Activated CD4-positive, alpha-beta memory T cell treated with anti-CD3 and anti-CD28 coated beads for 36 hours (primary cell): ENCODE measurements at regions of chr10 and their contacts with region 1.

Region 1: GRCh38 chr10:79463578-79464496 is 18.4 kb upstream of the ZCCHC24 start:
- DNase-seq: no peak
- H3K4me3 Mint-ChIP-seq: no peak overlapping the region
- H3K27ac Mint-ChIP-seq: no peak overlapping the region
- H3K4me1 Mint-ChIP-seq: no peaks in the 10 kb centered on the region
- H3K27me3 Mint-ChIP-seq: peaks cover 1% of the 10 kb centered on the region

Region 2: DNA sequence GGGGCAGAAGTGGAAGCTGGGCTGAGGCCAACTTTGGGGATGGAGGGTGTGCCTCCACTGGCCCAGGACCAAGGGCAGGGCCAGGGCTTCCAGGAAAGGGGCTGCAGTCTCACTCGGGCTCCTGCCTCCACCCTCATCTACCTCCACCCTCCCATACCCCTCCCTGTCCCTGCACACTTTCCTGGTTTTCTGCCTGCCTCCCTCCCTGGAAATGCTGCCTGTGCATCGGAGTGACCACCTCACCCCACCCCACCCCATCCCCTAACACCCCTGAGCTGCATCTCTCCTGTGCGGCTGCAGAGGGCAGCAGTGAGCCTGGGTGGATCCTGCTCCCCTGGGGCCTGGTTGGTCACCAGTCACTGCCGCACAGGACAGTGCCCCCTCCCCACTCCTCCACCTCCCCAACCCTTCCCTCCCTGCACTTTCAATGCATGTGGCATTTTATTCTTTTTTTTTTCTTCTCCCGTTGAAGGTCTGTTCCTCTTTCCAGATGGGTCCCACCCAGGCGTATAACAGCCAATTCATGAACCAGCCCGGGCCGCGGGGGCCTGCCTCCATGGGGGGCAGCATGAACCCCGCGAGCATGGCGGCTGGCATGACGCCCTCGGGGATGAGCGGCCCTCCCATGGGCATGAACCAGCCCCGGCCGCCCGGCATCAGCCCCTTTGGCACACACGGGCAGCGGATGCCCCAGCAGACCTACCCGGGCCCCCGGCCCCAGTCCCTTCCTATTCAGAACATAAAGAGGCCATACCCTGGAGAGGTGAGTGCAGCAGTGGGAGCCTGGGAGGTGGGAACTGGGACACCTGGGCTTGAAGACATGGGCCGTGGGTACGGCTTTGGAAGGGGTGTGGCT is 170.7 kb before region 1 on chr10:
- CTCF ChIA-PET with region 1: interaction called, 4 read pairs
- POLR2A ChIA-PET with region 1: no interaction called
- intact Hi-C with region 1: loop called (anchors 10 kb)
- DNase-seq: peak; percentile 53
- H3K4me3 Mint-ChIP-seq: no peak overlapping the region
- H3K27ac Mint-ChIP-seq: no peak overlapping the region
- H3K4me1 Mint-ChIP-seq: peaks cover 19% of the 10 kb centered on the region
- H3K27me3 Mint-ChIP-seq: no peaks in the 10 kb centered on the region

Region 3: GRCh38 chr10:79400146-79401004 is 63.5 kb before region 1 on chr10:
- CTCF ChIA-PET with region 1: interaction called, 16 read pairs
- POLR2A ChIA-PET with region 1: no interaction called
- intact Hi-C with region 1: loop called (anchors 1 kb)
- DNase-seq: peak; percentile 76
- H3K4me3 Mint-ChIP-seq: no peak overlapping the region
- H3K27ac Mint-ChIP-seq: no peak overlapping the region
- H3K4me1 Mint-ChIP-seq: no peaks in the 10 kb centered on the region
- H3K27me3 Mint-ChIP-seq: peaks cover 1% of the 10 kb centered on the region

Region 4: DNA sequence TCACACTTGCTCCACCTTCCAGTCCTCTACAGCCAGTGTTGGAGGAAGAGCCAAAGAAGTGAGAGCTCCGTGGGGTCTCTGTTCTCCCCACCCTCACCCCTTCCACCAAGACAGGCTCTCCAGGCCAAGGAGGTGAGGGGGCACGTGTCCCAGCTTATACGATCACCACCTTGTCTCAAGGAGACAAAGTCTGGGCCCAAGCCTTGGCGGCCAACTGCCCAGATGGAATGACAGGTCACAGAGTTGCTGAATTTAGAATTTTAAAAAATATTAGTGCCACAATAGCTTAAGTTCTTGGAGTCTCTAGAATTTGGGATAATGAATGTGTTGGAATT is 49.9 kb before region 1 on chr10:
- CTCF ChIA-PET with region 1: interaction called, 12 read pairs
- POLR2A ChIA-PET with region 1: no interaction called
- intact Hi-C with region 1: no loop called
- DNase-seq: no peak
- H3K4me3 Mint-ChIP-seq: no peak overlapping the region
- H3K27ac Mint-ChIP-seq: no peak overlapping the region
- H3K4me1 Mint-ChIP-seq: peaks cover 7% of the 10 kb centered on the region
- H3K27me3 Mint-ChIP-seq: no peaks in the 10 kb centered on the region

Region 5: DNA sequence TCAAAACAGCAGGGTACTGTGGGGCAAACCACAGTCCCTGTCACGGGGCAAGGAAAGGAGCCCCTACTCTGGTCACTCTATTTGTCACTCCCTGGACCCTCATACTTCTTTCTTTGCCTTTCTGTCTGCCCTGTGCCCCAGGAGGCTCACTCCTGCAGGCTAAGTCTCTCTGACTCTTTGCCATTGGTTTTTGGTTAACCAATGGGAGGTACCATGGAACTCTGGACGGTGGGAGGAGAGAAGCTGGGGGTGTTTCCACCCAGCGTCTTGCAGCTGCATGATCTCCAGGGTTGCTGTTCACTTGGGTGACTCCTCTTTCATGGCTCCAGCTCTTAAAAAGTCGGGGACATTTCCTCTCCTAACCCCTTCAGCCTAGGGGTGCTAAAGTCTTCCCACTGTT is 33.1 kb after region 1 on chr10:
- CTCF ChIA-PET with region 1: no interaction called
- POLR2A ChIA-PET with region 1: no interaction called
- intact Hi-C with region 1: no loop called
- DNase-seq: no peak
- H3K4me3 Mint-ChIP-seq: no peak overlapping the region
- H3K27ac Mint-ChIP-seq: no peak overlapping the region
- H3K4me1 Mint-ChIP-seq: no peaks in the 10 kb centered on the region
- H3K27me3 Mint-ChIP-seq: peaks cover 11% of the 10 kb centered on the region

Region 6: GRCh38 chr10:79507440-79508167 is 43.8 kb after region 1 on chr10:
- CTCF ChIA-PET with region 1: no interaction called
- POLR2A ChIA-PET with region 1: no interaction called
- intact Hi-C with region 1: no loop called
- DNase-seq: no peak
- H3K4me3 Mint-ChIP-seq: no peak overlapping the region
- H3K27ac Mint-ChIP-seq: no peak overlapping the region
- H3K4me1 Mint-ChIP-seq: no peaks in the 10 kb centered on the region
- H3K27me3 Mint-ChIP-seq: peaks cover 3% of the 10 kb centered on the region